Activated CD8-positive, alpha-beta T cell treated with anti-CD3 and anti-CD28 coated beads for 36 hours (primary cell): ENCODE measurements at regions of chr10 and their contacts with region 1.

Region 1: GRCh38 chr10:84256510-84257342 is 11.9 kb downstream of the RGR start:
- DNase-seq: peak; percentile 76
- ATAC-seq: peak; percentile 84
- H3K4me3 Mint-ChIP-seq: no peak overlapping the region
- H3K27ac Mint-ChIP-seq: no peak overlapping the region
- H3K4me1 Mint-ChIP-seq: peaks cover 4% of the 10 kb centered on the region
- H3K27me3 Mint-ChIP-seq: peaks cover 2% of the 10 kb centered on the region
- CTCF ChIP-seq: peak; percentile 72

Region 2: DNA sequence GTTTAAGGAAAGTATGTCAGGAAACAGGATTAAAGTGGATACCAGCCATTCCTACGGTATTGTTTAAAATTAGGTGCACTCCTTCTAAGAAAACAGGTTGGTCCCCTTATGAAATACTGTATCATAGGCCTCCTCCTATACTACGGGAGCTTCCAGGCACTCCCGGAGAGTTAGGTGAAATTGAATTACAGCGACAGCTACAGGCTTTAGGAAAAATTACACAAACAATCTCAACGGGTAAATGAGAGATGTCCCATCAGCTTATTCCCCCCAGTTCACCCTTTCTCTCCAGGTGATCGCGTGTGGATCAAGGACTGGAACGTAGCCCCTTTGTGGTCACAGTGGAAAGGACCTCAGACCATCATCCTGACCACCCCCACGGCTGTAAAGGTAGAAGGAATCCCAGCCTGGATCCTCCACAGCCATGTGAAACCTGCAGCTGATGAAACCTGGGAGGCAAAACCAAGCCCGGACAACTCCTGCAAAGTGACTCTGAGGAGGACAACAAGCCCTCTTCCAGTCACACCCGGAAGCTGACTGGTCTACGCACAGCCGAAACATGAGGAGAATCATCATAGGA is 142.5 kb before region 1 on chr10:
- CTCF ChIA-PET with region 1: no interaction called
- POLR2A ChIA-PET with region 1: no interaction called
- intact Hi-C with region 1: no loop called
- DNase-seq: no peak
- ATAC-seq: no peak
- H3K4me3 Mint-ChIP-seq: no peak overlapping the region
- H3K27ac Mint-ChIP-seq: no peak overlapping the region
- H3K4me1 Mint-ChIP-seq: no peaks in the 10 kb centered on the region
- H3K27me3 Mint-ChIP-seq: peaks cover 11% of the 10 kb centered on the region
- CTCF ChIP-seq: no peak

Region 3: DNA sequence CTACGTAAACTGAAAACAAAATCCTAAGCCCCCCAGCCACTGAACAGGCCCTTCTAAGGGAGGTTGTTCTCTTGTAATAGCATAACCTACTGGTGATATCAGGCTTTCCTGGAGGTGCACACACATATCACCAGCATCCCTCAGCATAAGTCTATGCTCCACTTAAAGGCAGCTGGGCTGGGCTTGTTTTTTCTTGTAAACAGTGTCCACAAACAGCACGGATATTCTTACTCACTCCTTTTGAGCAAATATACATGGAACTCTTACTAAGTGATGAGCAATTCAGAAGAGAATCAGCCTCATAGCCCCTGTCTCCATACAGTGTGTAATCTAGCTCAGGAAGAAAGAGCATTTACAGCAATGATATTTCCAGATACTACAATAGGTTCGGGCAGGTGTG is 17.8 kb before region 1 on chr10:
- CTCF ChIA-PET with region 1: interaction called, 11 read pairs
- POLR2A ChIA-PET with region 1: interaction called, 4 read pairs
- intact Hi-C with region 1: no loop called
- DNase-seq: no peak
- ATAC-seq: no peak
- H3K4me3 Mint-ChIP-seq: no peak overlapping the region
- H3K27ac Mint-ChIP-seq: no peak overlapping the region
- H3K4me1 Mint-ChIP-seq: no peaks in the 10 kb centered on the region
- H3K27me3 Mint-ChIP-seq: peaks cover 17% of the 10 kb centered on the region
- CTCF ChIP-seq: no peak

Region 4: GRCh38 chr10:84244651-84245270 is 12.0 kb before region 1 on chr10 and contains the start of gene RGR:
- CTCF ChIA-PET with region 1: interaction called, 12 read pairs
- POLR2A ChIA-PET with region 1: interaction called, 4 read pairs
- intact Hi-C with region 1: no loop called
- DNase-seq: no peak
- ATAC-seq: no peak
- H3K4me3 Mint-ChIP-seq: no peak within 1 kb of the TSS
- H3K27ac Mint-ChIP-seq: no peak within 1 kb of the TSS
- H3K4me1 Mint-ChIP-seq: no peaks in the 10 kb centered on the region
- H3K27me3 Mint-ChIP-seq: peaks cover 2% of the 10 kb centered on the region
- CTCF ChIP-seq: no peak
- total RNA-seq, gene RGR: not detected